Mammary epithelial cell (primary cell): ENCODE measurements at regions of chrX and their contacts with region 1.

Region 1: DNA sequence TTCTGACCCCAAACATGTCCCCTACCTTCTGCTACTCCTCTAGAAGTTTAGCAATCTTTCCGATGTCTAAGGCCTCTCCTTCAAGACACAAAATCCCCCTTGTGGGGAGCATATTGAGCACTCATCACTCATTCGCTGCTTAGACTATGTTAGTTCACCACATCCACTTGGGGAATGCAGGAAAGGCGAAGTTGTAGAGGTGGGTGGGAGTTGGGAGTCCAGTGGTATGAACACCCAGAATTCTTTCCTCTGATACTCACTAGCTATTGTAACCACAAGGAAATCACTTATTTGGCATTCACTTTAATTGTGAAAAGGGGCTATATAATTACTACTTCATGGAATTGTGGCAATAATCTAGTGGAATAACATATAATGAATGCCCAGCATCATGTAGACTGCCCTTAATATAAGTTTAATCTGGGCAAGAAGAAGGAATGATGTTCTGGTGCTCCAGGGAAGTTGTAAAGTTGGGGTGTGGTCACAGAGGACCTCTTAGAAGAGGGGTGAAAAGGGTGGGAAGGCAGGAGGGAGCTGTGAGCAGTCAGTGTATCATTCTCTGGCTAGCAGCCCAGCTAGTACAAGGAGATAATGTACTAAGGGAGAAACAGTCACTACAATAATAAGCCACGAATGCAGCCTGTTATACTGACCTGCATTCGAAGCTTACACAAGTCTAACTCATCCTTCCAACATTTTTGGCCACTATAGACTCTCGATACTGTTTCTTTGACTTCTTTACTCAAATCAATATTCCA is 468.2 kb upstream of the DIPK2B start:
- DNase-seq: peak; percentile 94
- H3K4me3 ChIP-seq: no peak overlapping the region
- H3K27ac ChIP-seq: peak overlapping the region; percentile 39
- H3K4me1 ChIP-seq: peaks cover 26% of the 10 kb centered on the region
- H3K27me3 ChIP-seq: no peaks in the 10 kb centered on the region
- CTCF ChIP-seq: no peak

Region 2: DNA sequence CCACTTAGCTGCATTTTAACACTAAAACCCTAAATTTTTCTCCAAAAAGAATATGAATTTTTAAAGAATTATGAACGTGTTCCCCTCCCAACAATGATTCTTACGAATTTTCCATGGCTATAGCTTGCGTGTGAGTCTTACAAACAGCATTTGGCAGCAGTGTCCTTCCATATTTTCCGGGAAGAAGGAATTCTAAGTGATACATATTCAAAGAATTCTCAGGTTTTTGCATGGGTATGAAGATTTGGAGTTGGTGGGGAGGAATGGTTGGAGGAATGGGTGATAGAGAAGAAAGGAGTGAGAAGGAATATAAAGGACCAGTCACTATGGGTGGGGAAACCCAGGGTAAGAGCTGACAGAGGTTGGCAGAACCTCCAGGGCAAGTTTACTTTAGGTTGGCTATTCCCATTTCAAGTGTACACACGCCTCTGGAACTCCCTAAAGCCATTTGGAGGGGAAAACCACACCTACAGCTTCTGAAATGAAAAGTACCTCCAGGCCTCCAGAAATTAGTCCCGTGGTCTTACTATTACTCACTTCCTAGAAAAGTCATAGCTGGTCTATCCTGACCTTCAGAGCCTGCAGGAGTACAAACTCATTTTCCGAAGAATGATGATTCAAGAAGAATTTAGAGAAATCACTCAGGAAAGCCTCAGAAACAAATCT is 47.4 kb before region 1 on chrX:
- CTCF ChIA-PET with region 1: no interaction called
- dilution Hi-C with region 1: no loop called
- in situ Hi-C with region 1: no loop called
- intact Hi-C with region 1: loop called (anchors 2 kb)
- DNase-seq: peak; percentile 96
- H3K4me3 ChIP-seq: no peak overlapping the region
- H3K27ac ChIP-seq: peak overlapping the region; percentile 68
- H3K4me1 ChIP-seq: peaks cover 36% of the 10 kb centered on the region
- H3K27me3 ChIP-seq: no peaks in the 10 kb centered on the region
- CTCF ChIP-seq: no peak

Region 3: DNA sequence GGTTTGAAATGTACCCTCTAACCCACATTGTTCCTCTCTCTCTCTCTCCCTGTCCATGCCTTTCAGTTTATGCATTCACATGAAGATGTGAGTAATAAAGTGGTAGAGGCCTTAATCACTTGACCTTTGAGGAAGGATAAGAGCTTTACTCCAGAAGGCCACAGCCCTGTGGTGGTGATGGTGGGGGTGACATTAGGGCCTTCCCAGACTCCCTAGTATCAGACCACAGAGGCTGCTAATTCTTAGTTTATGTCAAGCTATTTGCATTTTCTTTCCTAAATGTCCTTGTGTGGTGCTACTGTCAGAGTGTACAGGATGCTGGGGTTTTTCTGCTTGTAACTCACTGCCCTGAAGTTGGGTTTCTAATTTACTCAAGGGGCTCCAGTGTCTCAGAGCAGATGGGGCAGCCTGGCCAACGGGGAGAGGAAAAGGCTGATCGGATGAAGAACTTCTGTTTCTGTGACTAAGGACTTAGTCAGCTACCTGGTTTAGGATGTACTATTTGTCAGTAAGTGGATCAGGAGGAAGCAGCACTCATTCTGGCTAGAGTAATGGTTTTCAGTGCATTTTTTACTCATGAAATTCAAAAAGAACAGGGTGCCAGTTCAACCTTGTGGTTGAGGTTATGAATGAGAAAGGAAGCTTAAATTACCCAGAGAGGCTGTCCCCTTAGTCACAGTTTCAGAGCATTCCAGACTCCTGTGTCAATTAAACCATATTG is 41.4 kb after region 1 on chrX:
- CTCF ChIA-PET with region 1: interaction called, 5 read pairs
- dilution Hi-C with region 1: no loop called
- in situ Hi-C with region 1: no loop called
- intact Hi-C with region 1: loop called (anchors 1 kb)
- DNase-seq: peak; percentile 99
- H3K4me3 ChIP-seq: no peak overlapping the region
- H3K27ac ChIP-seq: peak overlapping the region; percentile 93
- H3K4me1 ChIP-seq: peaks cover 54% of the 10 kb centered on the region
- H3K27me3 ChIP-seq: no peaks in the 10 kb centered on the region
- CTCF ChIP-seq: no peak